Heart left ventricle (tissue), 16 donors: ENCODE measurements at regions of chr11 and their contacts with region 1.

Region 1: GRCh38 chr11:11215944-11216343 is 137.1 kb downstream of the CSNK2A3 start:
- DNase-seq: no peak
- ATAC-seq: no peak
- H3K4me3 ChIP-seq: no peak overlapping the region
- H3K27ac ChIP-seq: no peak overlapping the region
- H3K4me1 ChIP-seq: peaks cover 0 to 40% (median 14%) of the 10 kb centered on the region in 12 donors
- H3K27me3 ChIP-seq: no peaks in the 10 kb centered on the region
- CTCF ChIP-seq: no peak
- POLR2A ChIP-seq: no peak

Region 2: GRCh38 chr11:11148104-11148509 is 67.8 kb before region 1 on chr11:
- intact Hi-C with region 1: loop called in 1 of 10 experiments (anchors 5 kb)
- DNase-seq: peak; percentile 65 to 89 (median 81)
- ATAC-seq: peak; percentile 97 to 99 (median 98)
- H3K4me3 ChIP-seq: no peak overlapping the region
- H3K27ac ChIP-seq: peak overlapping the region in 10 of 12 donors; percentile 4 to 82 (median 63)
- H3K4me1 ChIP-seq: peaks cover 0 to 22% (median 10%) of the 10 kb centered on the region in 12 donors
- H3K27me3 ChIP-seq: no peaks in the 10 kb centered on the region
- CTCF ChIP-seq: peak in 7 of 12 donors; percentile 22 to 59 (median 51)
- POLR2A ChIP-seq: no peak

Region 3: GRCh38 chr11:11178671-11179638 is 37.0 kb before region 1 on chr11:
- intact Hi-C with region 1: loop called in 1 of 10 experiments (anchors 2 kb)
- DNase-seq: no peak
- ATAC-seq: peak in 3 of 4 donors; percentile 42 to 58 (median 53)
- H3K4me3 ChIP-seq: no peak overlapping the region
- H3K27ac ChIP-seq: no peak overlapping the region
- H3K4me1 ChIP-seq: peaks cover 0 to 6% (median 0%) of the 10 kb centered on the region in 12 donors
- H3K27me3 ChIP-seq: no peaks in the 10 kb centered on the region
- CTCF ChIP-seq: no peak
- POLR2A ChIP-seq: no peak